Calu3 (cell line): ENCODE measurements at regions of chr18 and their contacts with region 1.

Region 1: DNA sequence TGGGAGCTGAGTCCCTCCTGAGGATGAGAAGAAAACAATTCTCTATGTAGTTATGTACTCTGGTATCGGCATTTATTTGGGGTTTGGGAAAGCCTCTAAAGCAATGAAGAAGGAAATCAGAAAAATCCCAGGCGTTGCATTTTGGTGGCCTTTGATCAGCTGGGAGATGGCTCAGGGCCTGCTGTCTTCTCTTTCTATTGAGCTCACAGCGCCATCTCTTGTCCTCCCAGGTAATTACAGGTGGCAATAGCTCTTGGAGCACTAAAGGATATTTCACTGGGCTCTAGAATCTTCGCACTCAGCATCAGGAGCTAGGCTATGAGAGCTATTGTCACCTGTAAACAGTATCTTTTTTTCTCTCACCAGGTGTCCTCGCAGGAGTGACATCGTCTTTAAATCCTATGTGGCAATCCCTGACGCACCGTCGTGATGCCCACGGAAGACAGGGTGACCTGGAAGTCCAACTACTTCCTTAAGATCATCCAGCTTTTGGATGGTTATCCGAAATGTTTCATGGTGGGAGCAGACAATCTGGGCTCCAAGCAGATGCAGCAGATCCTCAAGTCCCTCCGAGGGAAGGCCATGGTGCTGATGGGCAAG is 76.1 kb upstream of the PMAIP1 start:
- DNase-seq: peak; percentile 81
- H3K4me3 Mint-ChIP-seq: no peak overlapping the region
- H3K27ac Mint-ChIP-seq: no peak overlapping the region
- H3K4me1 Mint-ChIP-seq: peaks cover 16% of the 10 kb centered on the region
- H3K27me3 Mint-ChIP-seq: no peaks in the 10 kb centered on the region
- CTCF ChIP-seq: peak; percentile 91

Region 2: GRCh38 chr18:59459369-59460079 is 364.2 kb before region 1 on chr18:
- CTCF ChIA-PET with region 1: interaction called, 32 read pairs
- intact Hi-C with region 1: loop called (anchors 1 kb)
- DNase-seq: no peak
- H3K4me3 Mint-ChIP-seq: no peak overlapping the region
- H3K27ac Mint-ChIP-seq: no peak overlapping the region
- H3K4me1 Mint-ChIP-seq: no peaks in the 10 kb centered on the region
- H3K27me3 Mint-ChIP-seq: peaks cover 54% of the 10 kb centered on the region
- CTCF ChIP-seq: no peak

Region 3: GRCh38 chr18:59631583-59632181 is 192.0 kb before region 1 on chr18:
- CTCF ChIA-PET with region 1: interaction called, 83 read pairs
- intact Hi-C with region 1: loop called (anchors 1 kb)
- DNase-seq: peak; percentile 21
- H3K4me3 Mint-ChIP-seq: no peak overlapping the region
- H3K27ac Mint-ChIP-seq: no peak overlapping the region
- H3K4me1 Mint-ChIP-seq: no peaks in the 10 kb centered on the region
- H3K27me3 Mint-ChIP-seq: peaks cover 46% of the 10 kb centered on the region
- CTCF ChIP-seq: peak; percentile 87

Region 4: GRCh38 chr18:59697236-59697932 is 126.3 kb before region 1 on chr18 and contains the start of gene CCBE1:
- CTCF ChIA-PET with region 1: interaction called, 35 read pairs
- intact Hi-C with region 1: loop called (anchors 1 kb)
- DNase-seq: peak; percentile 82
- H3K4me3 Mint-ChIP-seq: peak within 1 kb of the TSS; percentile 74
- H3K27ac Mint-ChIP-seq: no peak within 1 kb of the TSS
- H3K4me1 Mint-ChIP-seq: peaks cover 8% of the 10 kb centered on the region
- H3K27me3 Mint-ChIP-seq: peaks cover 32% of the 10 kb centered on the region
- CTCF ChIP-seq: peak; percentile 89
- total RNA-seq, gene CCBE1: 0.05 and 0.12 TPM in 2 replicates

Region 5: GRCh38 chr18:59783138-59783537 is 40.6 kb before region 1 on chr18:
- CTCF ChIA-PET with region 1: interaction called, 40 read pairs
- intact Hi-C with region 1: loop called (anchors 1 kb)
- DNase-seq: peak; percentile 72
- H3K4me3 Mint-ChIP-seq: no peak overlapping the region
- H3K27ac Mint-ChIP-seq: peak overlapping the region; percentile 11
- H3K4me1 Mint-ChIP-seq: peaks cover 36% of the 10 kb centered on the region
- H3K27me3 Mint-ChIP-seq: no peaks in the 10 kb centered on the region
- CTCF ChIP-seq: peak; percentile 44

Region 6: DNA sequence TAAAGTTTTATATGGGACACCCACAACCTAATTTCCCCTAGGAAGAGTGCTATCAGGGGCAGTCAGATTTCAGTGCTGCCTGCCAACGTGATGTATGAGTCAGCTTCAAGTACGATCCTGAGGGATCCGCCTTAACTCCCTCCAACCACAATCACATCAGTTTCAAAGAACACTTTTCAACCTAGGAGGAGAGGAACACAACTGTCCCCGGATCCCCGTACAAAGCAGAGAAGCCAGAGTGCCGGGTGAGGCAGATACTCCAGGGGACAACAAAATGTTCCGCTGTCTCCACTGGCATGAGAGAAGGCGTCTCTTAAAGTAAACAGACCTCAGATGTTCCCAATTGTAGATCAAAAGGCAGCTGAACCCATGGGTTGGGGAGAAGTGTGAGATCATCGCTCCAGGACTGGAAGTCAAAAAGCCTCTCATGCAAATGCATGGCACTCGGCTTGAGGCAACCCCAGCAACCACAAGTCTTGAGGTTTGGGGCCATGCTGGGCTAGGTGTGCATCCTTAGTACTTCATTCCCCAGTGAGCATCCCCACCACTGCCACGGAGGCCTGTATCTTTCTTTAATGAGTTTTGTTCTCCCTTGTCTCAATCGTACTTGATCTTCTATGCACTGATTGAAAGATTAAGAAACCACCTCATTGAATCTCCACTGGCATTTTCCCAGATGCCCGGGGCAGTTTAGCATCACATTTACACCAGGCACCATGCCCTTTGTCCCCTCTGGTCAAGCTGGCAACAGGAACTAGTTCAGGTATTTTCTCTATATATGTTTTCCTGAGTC is 35.5 kb before region 1 on chr18:
- CTCF ChIA-PET with region 1: interaction called, 40 read pairs
- intact Hi-C with region 1: loop called (anchors 1 kb)
- DNase-seq: no peak
- H3K4me3 Mint-ChIP-seq: peak overlapping the region; percentile 38
- H3K27ac Mint-ChIP-seq: peak overlapping the region; percentile 68
- H3K4me1 Mint-ChIP-seq: peaks cover 56% of the 10 kb centered on the region
- H3K27me3 Mint-ChIP-seq: no peaks in the 10 kb centered on the region
- CTCF ChIP-seq: no peak

Region 7: GRCh38 chr18:59799383-59800015 is 24.2 kb before region 1 on chr18:
- CTCF ChIA-PET with region 1: interaction called, 5 read pairs
- intact Hi-C with region 1: loop called (anchors 2 kb)
- DNase-seq: no peak
- H3K4me3 Mint-ChIP-seq: no peak overlapping the region
- H3K27ac Mint-ChIP-seq: no peak overlapping the region
- H3K4me1 Mint-ChIP-seq: peaks cover 9% of the 10 kb centered on the region
- H3K27me3 Mint-ChIP-seq: no peaks in the 10 kb centered on the region
- CTCF ChIP-seq: no peak